H1 (cell line): ENCODE measurements at regions of chr21 and their contacts with region 1.

Region 1: DNA sequence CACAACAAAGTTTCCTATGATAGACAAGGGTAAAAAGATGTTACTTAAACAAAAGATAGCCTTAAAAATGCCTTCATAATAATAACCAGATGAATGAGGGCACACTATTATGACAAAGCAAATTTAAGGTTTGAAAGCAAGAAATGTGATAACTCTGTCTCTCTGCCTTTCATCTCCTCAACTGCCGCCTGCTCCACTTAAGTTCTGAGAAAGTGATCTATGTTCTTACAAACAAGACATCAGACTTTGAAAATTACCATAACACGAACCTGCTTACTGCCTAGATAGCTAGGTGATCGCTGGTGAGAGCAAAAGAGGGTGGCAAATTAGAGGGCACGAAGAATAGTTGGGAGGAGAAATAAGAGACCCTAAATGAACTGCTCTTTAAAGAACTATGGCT is 13.2 kb downstream of the C21orf91 start:
- DNase-seq: no peak
- H3K4me3 ChIP-seq: no peak overlapping the region
- H3K27ac ChIP-seq: no peak overlapping the region
- H3K4me1 ChIP-seq: no peaks in the 10 kb centered on the region
- H3K27me3 ChIP-seq: no peaks in the 10 kb centered on the region
- CTCF ChIP-seq: no peak
- EP300 ChIP-seq: no peak
- POLR2A ChIP-seq: no peak
- RAD21 ChIP-seq: no peak

Region 2: DNA sequence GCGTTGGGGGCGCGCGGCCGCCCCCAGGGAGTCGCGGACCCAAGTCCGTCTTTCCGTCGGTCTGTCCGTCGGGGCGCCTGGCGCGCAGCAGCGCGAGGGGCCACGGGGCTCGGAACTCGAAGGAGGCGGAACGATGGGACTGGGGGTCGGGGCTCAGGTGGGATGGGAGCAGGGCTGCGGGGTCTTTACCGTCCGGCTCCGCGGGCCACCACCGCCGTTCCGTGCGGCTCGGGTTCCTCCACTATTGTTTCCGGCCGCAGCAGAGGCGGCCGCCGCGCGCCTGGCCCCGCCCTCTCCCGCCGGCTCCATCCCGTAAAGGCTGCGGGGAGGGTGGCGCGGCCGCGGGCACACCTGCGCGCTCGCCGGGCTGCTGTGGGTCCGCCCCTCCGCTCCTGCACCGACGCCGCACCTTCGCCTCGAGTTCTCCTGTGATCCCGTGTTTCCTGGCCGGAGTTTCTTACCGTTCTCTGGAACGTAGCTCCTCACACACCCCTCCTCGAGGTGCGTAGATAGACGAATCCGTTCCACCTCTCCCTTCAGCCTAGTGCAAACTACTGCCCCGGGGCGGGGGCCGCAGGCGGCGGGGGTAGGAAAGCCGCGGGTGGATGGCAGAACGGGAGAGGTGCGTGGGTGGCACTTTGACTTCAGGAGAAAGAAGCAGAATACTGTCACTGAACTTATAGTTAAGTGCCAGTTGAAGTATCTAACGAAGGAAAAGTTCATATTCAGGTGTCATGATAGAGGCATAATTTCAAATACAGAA is 13.3 kb after region 1 on chr21 and contains the start of gene C21orf91:
- CTCF ChIA-PET with region 1: interaction called, 3 read pairs
- POLR2A ChIA-PET with region 1: interaction called, 12 read pairs
- DNase-seq: peak; percentile 41 to 86
- H3K4me3 ChIP-seq: peak within 1 kb of the TSS; percentile 70 to 90 (median 74)
- H3K27ac ChIP-seq: peak within 1 kb of the TSS; percentile 99
- H3K4me1 ChIP-seq: peaks cover 0 to 6% (median 3%) of the 10 kb centered on the region in 4 experiments; a peak in 4 of 7 replicates
- H3K27me3 ChIP-seq: no peaks in the 10 kb centered on the region
- CTCF ChIP-seq: no peak
- EP300 ChIP-seq: peak in 1 of 2 experiments; percentile 94; a peak in 2 of 3 replicates
- POLR2A ChIP-seq: peak; percentile 85 to 95
- RAD21 ChIP-seq: no peak
- total RNA-seq, gene C21orf91: 33.6 and 33.9 TPM in 2 replicates